PC-3 (cell line): ENCODE measurements at regions of chr20 and their contacts with region 1.

Region 1: GRCh38 chr20:38412877-38413577 is 22.1 kb downstream of the SNHG17 start:
- DNase-seq: no peak
- ATAC-seq: no peak
- H3K4me3 ChIP-seq: no peak overlapping the region
- H3K27ac ChIP-seq: no peak overlapping the region
- H3K4me1 ChIP-seq: no peaks in the 10 kb centered on the region
- H3K27me3 ChIP-seq: no peaks in the 10 kb centered on the region
- CTCF ChIP-seq: no peak

Region 2: DNA sequence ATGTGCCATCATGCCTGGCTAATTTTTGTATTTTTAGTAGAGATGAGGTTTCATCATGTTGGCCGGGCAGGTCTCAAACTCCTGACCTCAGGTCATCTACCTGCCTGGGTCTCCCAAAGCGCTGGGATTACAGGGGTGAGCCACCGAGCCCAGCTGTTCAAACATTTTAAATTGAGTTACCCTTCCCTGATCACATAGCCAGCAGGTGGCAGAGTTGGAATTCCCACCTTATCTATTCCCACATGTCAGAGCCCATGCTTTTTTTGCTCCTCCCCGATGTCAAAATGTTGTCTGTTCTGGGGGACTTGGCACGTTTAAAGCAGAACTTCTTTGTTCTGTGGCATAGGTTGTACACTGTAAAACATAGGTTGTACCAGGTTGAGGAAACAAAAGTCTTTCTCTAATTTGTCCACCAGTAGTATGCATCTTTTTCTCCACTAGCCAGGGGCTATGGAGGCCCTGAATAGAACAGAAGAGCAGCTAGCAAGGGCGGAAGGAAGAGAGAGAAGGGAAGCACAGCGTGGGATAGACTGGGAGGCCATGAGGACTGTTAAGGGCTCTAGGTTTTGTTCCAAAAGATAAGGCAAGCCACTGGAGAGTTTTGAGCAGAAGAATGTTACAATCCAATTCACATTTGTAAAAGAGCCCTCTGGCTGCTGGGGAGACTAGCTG is 74.0 kb before region 1 on chr20:
- CTCF ChIA-PET with region 1: interaction called, 9 read pairs
- POLR2A ChIA-PET with region 1: no interaction called
- intact Hi-C with region 1: loop called (anchors 1 kb)
- DNase-seq: peak; percentile 59
- ATAC-seq: peak; percentile 55; the same call in 1 of the 2 replicates
- H3K4me3 ChIP-seq: no peak overlapping the region
- H3K27ac ChIP-seq: no peak overlapping the region
- H3K4me1 ChIP-seq: no peaks in the 10 kb centered on the region
- H3K27me3 ChIP-seq: no peaks in the 10 kb centered on the region
- CTCF ChIP-seq: peak; percentile 57